Activated naive CD4-positive, alpha-beta T cell treated with anti-CD3 and anti-CD28 coated beads for 36 hours (primary cell): ENCODE measurements at regions of chr6 and their contacts with region 1.

Region 1: DNA sequence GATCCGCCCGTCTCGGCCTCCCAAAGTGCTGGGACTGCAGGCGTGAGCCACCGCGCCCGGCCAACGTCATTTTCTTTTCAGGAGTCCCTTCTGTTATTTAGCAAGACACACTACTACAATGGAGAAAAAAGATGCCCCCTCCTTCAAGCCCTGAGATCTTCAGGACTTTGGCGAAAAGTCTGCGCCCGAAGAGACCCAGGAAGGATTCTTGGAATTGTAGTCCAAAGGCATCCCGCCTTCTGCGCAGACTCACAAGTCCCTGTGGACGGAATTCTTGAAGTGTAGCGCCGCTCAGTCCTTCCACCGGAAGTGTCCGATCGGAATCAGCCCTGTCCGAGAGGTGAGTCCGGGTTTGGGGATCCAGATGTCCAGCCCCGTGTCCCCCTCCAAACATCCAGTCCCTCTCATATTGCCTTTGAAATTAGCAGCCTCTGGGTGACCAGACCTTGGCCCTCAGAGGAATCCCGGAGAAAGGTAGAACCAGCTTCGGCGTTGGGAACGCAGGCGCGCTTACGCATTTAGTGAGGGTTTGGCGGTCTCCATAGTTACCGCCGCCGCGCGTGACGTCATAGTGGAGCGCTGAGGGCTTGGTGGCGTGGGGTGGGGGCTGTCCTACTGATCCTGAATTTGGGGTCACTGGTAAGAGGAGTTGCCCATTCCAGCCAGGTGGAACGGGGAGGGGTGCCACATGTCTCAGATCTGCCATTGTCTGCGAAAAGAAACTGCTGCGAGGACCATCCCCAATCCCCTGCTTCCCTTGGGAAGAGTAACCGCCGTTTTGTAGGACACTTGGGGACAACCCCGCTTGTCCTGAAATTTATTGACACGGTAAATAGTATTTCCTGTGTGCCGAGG is 490 bp downstream of the ZNF165 start:
- DNase-seq: peak; percentile 94
- H3K4me3 Mint-ChIP-seq: peak overlapping the region; percentile 97
- H3K27ac Mint-ChIP-seq: peak overlapping the region; percentile 96
- H3K4me1 Mint-ChIP-seq: peaks cover 15% of the 10 kb centered on the region
- H3K27me3 Mint-ChIP-seq: no peaks in the 10 kb centered on the region

Region 2: GRCh38 chr6:28104392-28105244 is 23.8 kb after region 1 on chr6:
- CTCF ChIA-PET with region 1: no interaction called
- intact Hi-C with region 1: loop called (anchors 1 kb)
- DNase-seq: peak; percentile 89
- H3K4me3 Mint-ChIP-seq: peak overlapping the region; percentile 89
- H3K27ac Mint-ChIP-seq: peak overlapping the region; percentile 89
- H3K4me1 Mint-ChIP-seq: peaks cover 9% of the 10 kb centered on the region
- H3K27me3 Mint-ChIP-seq: peaks cover 10% of the 10 kb centered on the region

Region 3: GRCh38 chr6:28212510-28213212 is 131.8 kb after region 1 on chr6:
- CTCF ChIA-PET with region 1: no interaction called
- intact Hi-C with region 1: loop called (anchors 2 kb)
- DNase-seq: peak; percentile 86
- H3K4me3 Mint-ChIP-seq: peak overlapping the region; percentile 70
- H3K27ac Mint-ChIP-seq: peak overlapping the region; percentile 38
- H3K4me1 Mint-ChIP-seq: peaks cover 18% of the 10 kb centered on the region
- H3K27me3 Mint-ChIP-seq: peaks cover 72% of the 10 kb centered on the region

Region 4: DNA sequence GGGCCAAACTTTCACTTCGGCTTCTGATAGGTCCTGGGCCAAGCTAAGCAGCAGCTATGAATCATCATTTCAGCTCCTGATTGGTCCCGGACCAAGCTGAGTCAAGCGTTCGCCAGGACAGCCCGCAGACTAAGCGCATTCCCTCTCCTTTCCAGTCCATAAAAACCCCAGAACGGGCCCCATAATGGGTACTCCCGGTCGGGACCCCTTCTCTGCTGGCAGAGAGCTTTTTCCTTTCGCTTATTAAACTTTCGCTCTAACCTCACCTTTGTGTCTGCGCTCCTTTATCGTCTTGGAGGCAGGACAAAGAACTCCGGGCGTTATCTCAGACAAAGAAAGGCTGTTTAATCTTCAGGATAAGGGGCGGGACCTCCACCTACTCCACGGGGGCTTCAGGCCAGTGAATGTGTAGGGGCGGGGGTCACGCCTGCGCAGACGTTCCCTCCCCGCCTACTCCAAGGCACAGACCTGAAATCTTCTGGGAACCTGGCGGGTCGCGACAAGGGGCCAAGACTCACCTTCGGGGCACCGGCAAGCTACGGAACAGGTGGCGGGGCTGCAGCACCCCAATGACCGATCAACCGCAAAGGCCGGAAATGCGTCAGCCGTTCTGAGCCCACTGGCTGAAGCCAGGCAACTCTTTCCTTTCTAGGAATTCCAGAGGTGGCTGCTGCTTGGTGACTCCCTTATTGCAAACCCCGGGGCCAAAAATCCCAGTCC is 254.9 kb after region 1 on chr6 and contains the start of gene ZSCAN31:
- CTCF ChIA-PET with region 1: no interaction called
- intact Hi-C with region 1: loop called (anchors 5 kb)
- DNase-seq: peak; percentile 90
- H3K4me3 Mint-ChIP-seq: no peak within 1 kb of the TSS
- H3K27ac Mint-ChIP-seq: no peak within 1 kb of the TSS
- H3K4me1 Mint-ChIP-seq: peaks cover 4% of the 10 kb centered on the region
- H3K27me3 Mint-ChIP-seq: no peaks in the 10 kb centered on the region
- total RNA-seq, gene ZSCAN31: 0.62 to 0.89 TPM

Region 5: GRCh38 chr6:28657769-28658465 is 577.1 kb after region 1 on chr6:
- CTCF ChIA-PET with region 1: no interaction called
- intact Hi-C with region 1: loop called (anchors 2 kb)
- DNase-seq: peak; percentile 74
- H3K4me3 Mint-ChIP-seq: peak overlapping the region; percentile 73
- H3K27ac Mint-ChIP-seq: peak overlapping the region; percentile 64
- H3K4me1 Mint-ChIP-seq: peaks cover 18% of the 10 kb centered on the region
- H3K27me3 Mint-ChIP-seq: peaks cover 63% of the 10 kb centered on the region